HEK293 (cell line): ENCODE measurements at regions of chr17 and their contacts with region 1.

Region 1: DNA sequence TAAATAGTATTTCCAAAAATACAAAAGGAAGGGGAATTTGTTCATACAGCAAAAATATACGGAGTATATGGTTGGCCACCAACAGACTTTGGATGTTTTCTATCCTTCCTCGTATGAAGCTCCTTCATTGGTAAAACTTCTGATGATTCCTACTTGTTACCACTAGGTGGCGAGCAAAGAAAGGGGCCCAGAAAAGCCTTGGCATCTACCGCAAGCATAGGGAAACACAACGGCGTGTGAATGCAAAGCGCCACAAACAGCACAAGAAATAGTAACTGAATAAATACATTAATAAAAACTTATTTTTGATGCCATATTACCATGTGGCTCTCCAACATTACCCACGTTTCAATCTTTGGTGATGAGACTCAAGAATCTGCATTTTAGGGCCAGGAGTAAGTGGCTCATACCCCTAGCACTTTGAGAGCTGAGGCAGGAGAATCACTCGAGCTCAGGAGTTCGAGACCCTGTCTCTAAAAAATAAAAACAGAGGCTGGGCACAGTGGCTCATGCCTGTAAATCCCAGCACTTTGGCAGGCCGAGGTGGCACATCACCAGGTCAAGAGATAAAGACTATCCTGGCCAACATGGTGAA is 34.5 kb downstream of the YWHAE start:
- H3K4me3 ChIP-seq: no peak overlapping the region
- H3K27ac ChIP-seq: no peak overlapping the region; the same call in 1 of the 2 replicates
- H3K4me1 ChIP-seq: peaks cover 46% of the 10 kb centered on the region
- CTCF ChIP-seq: peak; percentile 61; the same call in 1 of the 2 replicates

Region 2: DNA sequence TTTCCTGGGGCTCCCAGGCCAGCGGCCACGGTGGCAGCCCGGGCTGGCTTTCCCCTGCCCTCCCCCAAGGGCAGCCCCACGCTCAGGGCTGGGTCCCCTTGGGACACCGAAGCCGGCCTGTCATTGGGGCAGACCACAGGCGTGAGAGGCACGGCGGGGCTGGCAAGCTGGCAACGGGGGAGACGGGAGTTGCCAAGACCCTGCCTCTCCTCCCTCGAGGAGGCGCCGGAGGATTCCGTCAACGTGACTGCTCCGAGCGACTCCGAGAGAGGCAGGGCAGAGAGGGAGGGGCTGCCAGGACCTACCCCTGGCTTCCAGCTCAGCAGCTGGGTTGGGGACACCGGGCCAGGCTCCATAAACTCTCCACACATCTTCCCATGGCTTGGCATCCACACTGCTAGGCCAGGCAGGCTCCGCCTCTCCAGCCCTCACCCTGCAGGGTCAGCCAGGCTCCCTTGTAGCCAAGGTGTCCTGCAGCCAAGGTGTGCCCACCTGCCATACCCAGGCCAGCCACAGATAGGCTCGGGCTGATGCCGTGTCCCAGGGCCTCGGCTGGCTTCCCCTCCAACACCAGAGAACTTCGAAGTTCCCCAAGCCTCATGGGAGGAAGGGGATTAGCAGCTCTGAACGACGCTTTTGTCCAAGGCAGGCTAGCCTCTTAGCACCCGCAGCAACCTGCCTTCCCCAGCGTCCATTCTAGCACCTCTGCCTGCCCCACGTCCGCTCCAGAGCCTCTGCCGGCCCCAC is 343.1 kb before region 1 on chr17:
- CTCF ChIA-PET with region 1: no interaction called
- POLR2A ChIA-PET with region 1: no interaction called
- H3K4me3 ChIP-seq: no peak overlapping the region
- H3K27ac ChIP-seq: no peak overlapping the region
- H3K4me1 ChIP-seq: no peaks in the 10 kb centered on the region
- CTCF ChIP-seq: no peak

Region 3: DNA sequence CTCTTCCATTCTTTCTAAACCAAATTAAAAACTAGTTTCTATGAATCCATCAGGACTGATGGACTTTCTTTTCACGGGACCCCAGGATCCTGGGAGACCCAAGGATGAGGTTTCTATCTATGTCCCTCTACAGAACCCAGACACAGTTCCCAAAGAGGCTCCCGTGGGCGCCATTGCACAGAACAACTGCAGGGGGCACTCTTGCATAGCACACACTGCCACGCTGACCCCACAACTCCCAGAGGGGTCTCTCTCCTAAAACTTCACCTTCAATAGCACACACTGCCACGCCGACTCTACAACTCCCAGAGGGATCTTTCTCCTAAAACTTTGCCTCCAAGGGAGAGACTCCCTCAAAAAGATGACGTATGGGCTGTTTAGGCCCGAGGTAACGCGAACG is 194.8 kb before region 1 on chr17:
- CTCF ChIA-PET with region 1: no interaction called
- POLR2A ChIA-PET with region 1: no interaction called
- H3K4me3 ChIP-seq: no peak overlapping the region
- H3K27ac ChIP-seq: no peak overlapping the region
- H3K4me1 ChIP-seq: 0 out of 2 replicates have a peak, but pooled peaks cover 5% of the 10 kb centered on the region
- CTCF ChIP-seq: 0 out of 2 replicates have a peak, but pooled peaks have one; percentile 24

Region 4: DNA sequence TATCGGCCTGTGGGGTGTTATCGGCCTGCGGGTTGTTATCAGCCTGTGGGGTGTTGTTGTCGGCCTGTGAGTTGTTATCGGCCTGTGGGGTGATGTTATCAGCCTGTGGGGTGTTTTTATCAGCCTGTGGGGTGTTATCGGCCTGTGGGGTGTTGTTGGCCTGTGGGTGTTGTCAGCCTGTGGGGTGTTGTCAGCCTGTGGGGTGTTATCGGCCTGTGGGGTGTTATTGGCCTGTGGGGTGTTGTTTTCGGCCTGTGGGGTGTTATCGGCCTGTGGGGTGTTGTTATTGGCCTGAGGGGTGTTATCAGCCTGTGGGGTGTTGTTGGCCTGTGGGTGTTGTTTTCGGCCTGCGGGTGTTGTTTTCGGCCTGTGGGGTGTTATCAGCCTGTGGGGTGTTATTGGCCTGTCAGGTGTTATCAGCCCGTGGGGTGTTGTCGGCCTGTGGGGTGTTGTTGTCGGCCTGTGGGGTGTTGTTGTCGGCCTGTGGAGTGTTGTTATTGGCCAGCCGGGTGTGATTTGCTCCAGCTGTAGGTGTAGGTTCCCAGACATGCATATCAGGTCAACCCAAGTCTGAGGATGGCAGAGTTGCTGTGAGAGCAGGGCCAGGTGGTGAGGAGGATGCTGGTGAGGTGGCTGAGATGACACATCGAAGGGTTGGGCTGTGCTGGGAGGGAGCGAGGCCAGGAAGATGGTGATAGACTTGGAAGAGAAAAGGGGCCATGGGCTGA is 79.0 kb before region 1 on chr17:
- CTCF ChIA-PET with region 1: no interaction called
- POLR2A ChIA-PET with region 1: no interaction called
- H3K4me3 ChIP-seq: no peak overlapping the region
- H3K27ac ChIP-seq: no peak overlapping the region
- H3K4me1 ChIP-seq: no peaks in the 10 kb centered on the region
- CTCF ChIP-seq: no peak

Region 5: DNA sequence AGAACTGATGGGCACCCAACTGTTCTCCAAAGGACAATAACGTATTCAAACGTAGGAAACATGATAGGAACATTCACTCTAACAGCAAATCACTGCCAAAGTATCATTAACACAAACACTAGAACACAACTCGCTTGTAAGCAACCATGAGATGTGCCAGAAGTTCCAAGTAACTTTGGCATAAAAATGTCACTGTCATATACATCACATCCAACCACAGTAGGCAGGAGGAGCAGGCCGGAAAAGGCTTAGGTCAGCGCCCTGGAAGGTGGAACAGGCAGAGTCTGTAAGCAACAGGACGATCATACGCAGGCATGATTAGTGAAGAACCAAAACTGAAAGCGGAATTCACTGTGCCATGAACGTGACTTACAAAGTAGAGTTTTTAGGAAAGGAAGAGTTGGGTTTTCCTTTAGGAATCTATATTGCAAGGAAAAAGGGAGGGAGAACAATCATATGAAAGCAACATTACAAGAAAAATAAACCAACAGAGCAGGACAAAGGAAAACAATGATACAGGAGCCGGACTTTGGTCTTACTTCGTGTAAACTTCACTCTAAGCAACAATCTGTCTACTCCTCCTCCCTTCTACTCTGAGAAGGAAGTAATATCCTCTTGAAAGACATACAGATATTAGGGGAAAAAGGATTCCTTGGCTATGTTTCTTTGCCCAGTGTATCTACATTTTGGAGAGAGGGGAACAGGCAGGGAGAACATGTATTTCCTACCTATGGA is 17.8 kb before region 1 on chr17:
- CTCF ChIA-PET with region 1: interaction called, 11 read pairs
- POLR2A ChIA-PET with region 1: no interaction called
- H3K4me3 ChIP-seq: no peak overlapping the region
- H3K27ac ChIP-seq: peak overlapping the region; percentile 25; the same call in 1 of the 2 replicates
- H3K4me1 ChIP-seq: peaks cover 10% of the 10 kb centered on the region
- CTCF ChIP-seq: no peak

Region 6: DNA sequence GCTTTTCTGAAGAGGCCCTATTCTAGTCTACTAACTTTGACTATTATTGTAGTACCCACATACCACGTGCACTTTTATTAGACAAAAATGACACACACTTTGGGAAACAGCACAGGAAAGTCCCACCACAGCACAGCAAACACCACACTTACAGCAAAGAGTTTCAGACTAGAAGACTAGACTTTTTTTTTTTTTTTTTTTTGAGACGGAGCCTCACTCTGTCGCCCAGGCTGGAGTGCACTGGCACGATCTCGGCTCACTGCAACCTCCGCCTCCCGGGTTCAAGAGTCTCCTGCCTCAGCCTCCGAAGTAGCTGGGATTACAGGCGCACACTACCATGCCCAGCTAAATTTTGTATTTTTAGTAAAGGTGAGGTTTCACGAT is 14.4 kb after region 1 on chr17:
- CTCF ChIA-PET with region 1: interaction called, 42 read pairs
- POLR2A ChIA-PET with region 1: interaction called, 5 read pairs
- H3K4me3 ChIP-seq: no peak overlapping the region
- H3K27ac ChIP-seq: peak overlapping the region; percentile 1
- H3K4me1 ChIP-seq: peaks cover 68% of the 10 kb centered on the region
- CTCF ChIP-seq: no peak

Region 7: GRCh38 chr17:1399679-1400512 is 34.4 kb after region 1 on chr17 and contains the start of gene YWHAE:
- CTCF ChIA-PET with region 1: interaction called, 35 read pairs
- POLR2A ChIA-PET with region 1: interaction called, 14 read pairs
- H3K4me3 ChIP-seq: peak within 1 kb of the TSS; percentile 93
- H3K27ac ChIP-seq: peak within 1 kb of the TSS; percentile 100
- H3K4me1 ChIP-seq: peaks cover 12% of the 10 kb centered on the region
- CTCF ChIP-seq: no peak

Region 8: DNA sequence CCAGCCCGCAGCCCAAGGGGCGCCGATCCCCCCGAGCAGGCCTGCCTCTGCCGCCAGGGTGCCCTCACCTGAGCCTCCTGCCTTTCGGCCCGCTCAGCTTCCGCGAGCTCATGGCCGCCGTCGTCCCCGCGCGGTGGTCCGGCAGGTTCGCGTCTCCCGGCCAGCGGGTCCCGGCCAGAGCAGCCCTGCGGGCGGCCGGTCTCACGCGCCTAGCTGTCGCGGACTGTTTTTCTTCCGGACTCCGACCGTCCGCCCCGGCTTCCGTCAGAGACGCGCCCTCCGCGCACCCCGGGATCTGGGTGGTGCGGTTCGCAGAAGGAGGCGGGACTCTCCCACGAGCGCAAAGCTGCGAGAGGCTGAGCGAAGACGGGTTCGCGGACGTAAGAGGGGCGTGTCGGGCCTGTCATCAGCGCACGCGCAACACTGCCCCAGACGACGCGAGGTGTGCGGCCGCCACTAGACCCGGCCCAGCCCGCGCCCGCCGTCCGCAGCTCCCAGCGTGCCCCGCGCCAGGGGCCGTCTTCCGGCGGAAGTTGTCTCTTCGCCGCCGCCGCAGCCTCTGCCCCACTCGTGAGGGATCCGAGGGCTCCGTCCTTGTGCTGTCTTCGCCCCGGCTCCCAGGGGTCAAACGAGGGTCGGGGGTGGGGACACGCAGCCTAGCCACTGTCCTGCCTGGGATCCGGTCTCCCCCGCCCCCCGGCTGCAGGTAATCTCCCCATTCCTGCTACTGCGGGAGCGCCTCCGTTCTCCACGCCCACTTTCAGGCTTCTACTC is 151.0 kb after region 1 on chr17 and contains the start of gene INPP5K:
- CTCF ChIA-PET with region 1: interaction called, 39 read pairs
- POLR2A ChIA-PET with region 1: interaction called, 24 read pairs
- H3K4me3 ChIP-seq: peak within 1 kb of the TSS; percentile 96
- H3K27ac ChIP-seq: peak within 1 kb of the TSS; percentile 62
- H3K4me1 ChIP-seq: no peaks in the 10 kb centered on the region
- CTCF ChIP-seq: peak; percentile 57

Region 9: GRCh38 chr17:2054512-2055291 is 689.2 kb after region 1 on chr17 and contains the start of gene HIC1:
- CTCF ChIA-PET with region 1: no interaction called
- POLR2A ChIA-PET with region 1: no interaction called
- H3K4me3 ChIP-seq: peak within 1 kb of the TSS; percentile 48
- H3K27ac ChIP-seq: no peak within 1 kb of the TSS; the same call in 1 of the 2 replicates
- H3K4me1 ChIP-seq: peaks cover 5% of the 10 kb centered on the region; the same call in 1 of the 2 replicates
- CTCF ChIP-seq: peak; percentile 78